ENCODE measurements at regions of chr7 and their contacts with region 1.

Region 1: GRCh38 chr7:90262438-90262837 is 17.5 kb downstream of the CFAP69 start:
- DNase-seq: no peak
- ATAC-seq: no peak
- H3K4me3 Mint-ChIP-seq: no peak overlapping the region
- H3K27ac Mint-ChIP-seq: no peak overlapping the region
- H3K4me1 Mint-ChIP-seq: no peaks in the 10 kb centered on the region
- H3K27me3 Mint-ChIP-seq: peaks cover 5% of the 10 kb centered on the region

Region 2: GRCh38 chr7:90312745-90313144 is 50.3 kb after region 1 on chr7:
- CTCF ChIA-PET with region 1: no interaction called
- POLR2A ChIA-PET with region 1: no interaction called
- intact Hi-C with region 1: loop called in 1 of 2 experiments (anchors 5 kb)
- DNase-seq: no peak
- ATAC-seq: no peak
- H3K4me3 Mint-ChIP-seq: no peak overlapping the region
- H3K27ac Mint-ChIP-seq: no peak overlapping the region
- H3K4me1 Mint-ChIP-seq: no peaks in the 10 kb centered on the region
- H3K27me3 Mint-ChIP-seq: peaks cover 14% of the 10 kb centered on the region

Measured in activated CD4-positive, alpha-beta T cell treated with anti-CD3 and anti-CD28 coated beads for 36 hours (primary cell).